Activated CD4-positive, alpha-beta memory T cell treated with anti-CD3 and anti-CD28 coated beads, Interleukin-2, amount 10 ng/mL, durations not matched to agents 7 days and 5 days (primary cell): ENCODE measurements at regions of chr2 and their contacts with region 1.

Region 1: GRCh38 chr2:25951071-25951547 is 31.2 kb downstream of the KIF3C start:
- DNase-seq: peak; percentile 77
- H3K4me3 Mint-ChIP-seq: no peak overlapping the region
- H3K27ac Mint-ChIP-seq: no peak overlapping the region
- H3K4me1 Mint-ChIP-seq: peaks cover 4% of the 10 kb centered on the region
- H3K27me3 Mint-ChIP-seq: no peaks in the 10 kb centered on the region

Region 2: DNA sequence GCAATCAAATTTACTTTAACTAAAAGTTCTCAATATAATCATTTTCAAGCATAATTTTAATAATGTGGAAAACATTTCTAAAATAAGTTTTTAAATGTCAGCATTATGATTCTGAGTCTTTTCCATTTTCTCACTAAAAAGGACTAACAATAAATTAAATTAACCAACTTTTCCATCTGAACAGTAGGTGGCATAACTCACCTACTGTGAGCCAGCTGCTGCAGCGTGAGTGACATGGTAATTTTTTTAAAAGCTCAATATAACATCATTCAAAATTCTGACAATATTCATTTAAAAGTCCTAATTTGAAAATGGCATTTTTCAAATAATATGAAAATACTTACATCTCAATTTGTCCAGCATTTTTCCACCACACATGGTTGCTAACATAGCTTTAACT is 344.2 kb before region 1 on chr2:
- CTCF ChIA-PET with region 1: interaction called, 10 read pairs
- POLR2A ChIA-PET with region 1: no interaction called
- DNase-seq: no peak
- H3K4me3 Mint-ChIP-seq: no peak overlapping the region
- H3K27ac Mint-ChIP-seq: no peak overlapping the region
- H3K4me1 Mint-ChIP-seq: peaks cover 15% of the 10 kb centered on the region
- H3K27me3 Mint-ChIP-seq: no peaks in the 10 kb centered on the region

Region 3: GRCh38 chr2:25972049-25972823 is 21.1 kb after region 1 on chr2:
- CTCF ChIA-PET with region 1: interaction called, 10 read pairs
- POLR2A ChIA-PET with region 1: no interaction called
- DNase-seq: no peak
- H3K4me3 Mint-ChIP-seq: no peak overlapping the region
- H3K27ac Mint-ChIP-seq: no peak overlapping the region
- H3K4me1 Mint-ChIP-seq: peaks cover 6% of the 10 kb centered on the region
- H3K27me3 Mint-ChIP-seq: no peaks in the 10 kb centered on the region

Region 4: DNA sequence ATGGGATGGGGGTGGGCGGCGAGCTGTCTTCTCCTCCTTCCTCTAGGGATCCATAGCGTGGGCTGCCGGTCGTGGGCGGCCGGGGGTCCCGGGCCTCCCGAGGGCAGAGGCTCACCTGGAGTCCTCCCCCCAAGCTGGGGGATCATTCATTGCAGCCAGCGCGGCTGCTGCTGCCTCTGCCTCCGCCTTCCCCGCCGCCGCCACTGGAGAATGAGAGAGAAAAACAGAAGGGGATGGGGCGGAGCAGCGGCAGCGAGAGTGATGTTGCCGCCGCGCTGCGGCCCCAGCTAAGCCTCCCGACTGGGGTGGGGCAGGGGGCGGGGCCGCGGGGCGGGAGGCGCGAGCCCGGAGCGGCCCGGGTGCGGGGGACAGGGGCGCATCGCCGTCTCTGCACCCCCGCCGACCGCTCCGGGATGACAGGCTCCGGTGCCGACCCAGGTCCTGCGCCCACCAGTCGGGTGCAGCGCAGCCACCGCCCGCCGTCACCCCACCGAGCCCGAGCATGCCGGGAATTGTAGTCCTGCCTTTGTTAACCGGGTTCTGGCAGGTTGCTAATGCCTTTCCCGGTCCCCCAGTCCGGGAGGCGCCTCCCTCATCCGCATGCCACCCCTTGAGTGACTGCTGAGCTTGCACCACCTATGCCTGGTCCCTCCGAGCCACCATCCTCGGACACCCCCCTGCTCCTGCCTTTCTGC is 31.3 kb after region 1 on chr2 and contains the start of gene KIF3C:
- CTCF ChIA-PET with region 1: interaction called, 11 read pairs
- POLR2A ChIA-PET with region 1: no interaction called
- DNase-seq: peak; percentile 80
- H3K4me3 Mint-ChIP-seq: peak within 1 kb of the TSS; percentile 86
- H3K27ac Mint-ChIP-seq: peak within 1 kb of the TSS; percentile 67
- H3K4me1 Mint-ChIP-seq: peaks cover 18% of the 10 kb centered on the region
- H3K27me3 Mint-ChIP-seq: peaks cover 4% of the 10 kb centered on the region
- total RNA-seq, gene KIF3C: 10.3 to 10.7 TPM

Region 5: GRCh38 chr2:25991965-25992364 is 40.9 kb after region 1 on chr2:
- CTCF ChIA-PET with region 1: interaction called, 27 read pairs
- POLR2A ChIA-PET with region 1: no interaction called
- DNase-seq: no peak
- H3K4me3 Mint-ChIP-seq: no peak overlapping the region
- H3K27ac Mint-ChIP-seq: no peak overlapping the region
- H3K4me1 Mint-ChIP-seq: peaks cover 28% of the 10 kb centered on the region
- H3K27me3 Mint-ChIP-seq: peaks cover 12% of the 10 kb centered on the region

Region 6: DNA sequence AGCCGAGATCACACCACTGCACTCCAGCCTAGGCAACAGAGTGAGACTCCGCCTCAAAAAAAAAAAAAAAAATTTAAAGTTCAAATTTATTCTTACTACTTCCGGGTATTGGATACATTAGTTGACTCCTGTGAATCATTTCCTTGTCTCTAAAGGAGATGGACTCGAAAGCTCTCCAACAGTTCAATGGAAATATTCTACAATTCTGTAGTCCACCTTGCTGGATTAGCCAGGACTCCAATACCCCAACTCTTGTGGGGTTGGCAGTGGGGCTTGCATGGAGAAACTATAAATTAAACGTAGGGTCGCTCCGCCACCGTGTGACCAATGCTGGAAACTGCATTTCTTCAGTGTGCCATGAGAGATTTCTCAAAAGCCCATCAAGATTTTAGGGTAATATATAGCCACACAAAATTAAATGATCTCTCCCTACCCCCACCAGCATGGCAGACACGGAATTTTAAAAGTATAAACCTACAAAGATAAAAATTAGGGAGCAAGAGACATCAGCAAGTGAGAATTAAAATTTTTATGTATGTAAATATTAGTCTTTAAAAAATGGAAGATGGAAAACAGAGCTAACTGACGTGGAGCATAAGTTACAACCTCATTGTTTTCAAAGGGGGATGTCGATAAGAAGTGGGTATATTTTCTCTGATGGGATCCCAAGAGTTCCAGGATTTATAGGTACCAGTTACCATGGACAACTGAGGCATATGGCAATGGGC is 194.0 kb after region 1 on chr2:
- CTCF ChIA-PET with region 1: interaction called, 26 read pairs
- POLR2A ChIA-PET with region 1: no interaction called
- DNase-seq: peak; percentile 74
- H3K4me3 Mint-ChIP-seq: no peak overlapping the region
- H3K27ac Mint-ChIP-seq: no peak overlapping the region
- H3K4me1 Mint-ChIP-seq: no peaks in the 10 kb centered on the region
- H3K27me3 Mint-ChIP-seq: peaks cover 10% of the 10 kb centered on the region